ENCODE measurements at regions of chr15 and their contacts with region 1.

Region 1: DNA sequence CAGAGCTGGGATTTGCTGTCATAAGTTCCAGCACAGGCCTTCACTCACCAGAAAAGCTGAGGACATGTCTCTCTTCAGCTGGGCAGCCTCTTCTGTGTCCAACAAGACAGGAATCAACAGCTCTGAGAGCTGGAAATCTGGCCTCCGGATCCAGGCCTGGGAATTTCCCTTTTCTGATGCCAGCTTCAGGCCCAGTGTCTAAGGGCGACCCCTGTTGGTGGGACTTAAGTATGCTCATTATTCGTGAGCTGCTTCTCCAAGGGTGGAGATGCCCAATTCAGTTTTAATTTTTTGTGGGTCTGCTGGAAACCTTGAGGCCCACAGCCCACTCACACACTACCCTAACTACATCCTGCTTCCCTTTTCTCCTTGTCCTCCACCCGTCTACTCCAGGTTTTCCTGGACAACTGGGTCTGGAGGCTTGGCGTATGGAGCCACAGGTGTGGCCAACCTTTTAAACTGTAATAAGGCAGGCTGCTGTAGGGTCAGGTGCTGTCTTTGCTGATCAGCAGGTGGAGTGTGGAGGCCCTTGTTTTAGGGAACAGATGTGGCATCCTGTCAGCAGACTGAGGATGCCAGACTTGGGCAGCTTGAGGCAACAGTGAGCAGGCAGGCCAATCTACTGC is 2.6 kb upstream of the CEMIP start:
- DNase-seq: peak; percentile 64
- H3K4me3 ChIP-seq: no peak overlapping the region
- CTCF ChIP-seq: peak; percentile 79

Region 2: GRCh38 chr15:80418892-80419537 is 357.5 kb before region 1 on chr15:
- CTCF ChIA-PET with region 1: interaction called, 56 read pairs
- POLR2A ChIA-PET with region 1: no interaction called
- DNase-seq: no peak
- H3K4me3 ChIP-seq: no peak overlapping the region
- CTCF ChIP-seq: peak; percentile 73

Region 3: DNA sequence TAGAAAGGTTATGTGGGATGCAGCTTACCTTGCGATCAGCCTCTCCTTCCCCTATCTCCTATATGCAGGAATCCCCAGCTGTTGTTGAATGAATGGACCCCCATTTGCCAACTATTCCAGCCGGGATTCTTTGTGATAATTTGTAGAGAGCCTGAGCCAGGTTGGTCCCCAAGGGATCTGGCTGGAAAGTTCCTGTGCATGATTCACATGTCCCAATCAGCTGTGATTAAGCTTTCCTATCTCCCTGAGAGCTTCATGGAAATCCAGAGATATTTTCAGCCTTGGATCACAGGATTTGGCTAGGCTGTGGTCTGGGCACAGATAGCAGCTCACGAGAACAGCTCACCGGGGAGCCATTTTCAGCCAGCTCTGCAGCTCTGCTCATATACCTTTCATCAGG is 295.6 kb before region 1 on chr15:
- CTCF ChIA-PET with region 1: interaction called, 28 read pairs
- POLR2A ChIA-PET with region 1: interaction called, 7 read pairs
- DNase-seq: peak; percentile 93
- H3K4me3 ChIP-seq: peak overlapping the region; percentile 31
- CTCF ChIP-seq: no peak

Region 4: DNA sequence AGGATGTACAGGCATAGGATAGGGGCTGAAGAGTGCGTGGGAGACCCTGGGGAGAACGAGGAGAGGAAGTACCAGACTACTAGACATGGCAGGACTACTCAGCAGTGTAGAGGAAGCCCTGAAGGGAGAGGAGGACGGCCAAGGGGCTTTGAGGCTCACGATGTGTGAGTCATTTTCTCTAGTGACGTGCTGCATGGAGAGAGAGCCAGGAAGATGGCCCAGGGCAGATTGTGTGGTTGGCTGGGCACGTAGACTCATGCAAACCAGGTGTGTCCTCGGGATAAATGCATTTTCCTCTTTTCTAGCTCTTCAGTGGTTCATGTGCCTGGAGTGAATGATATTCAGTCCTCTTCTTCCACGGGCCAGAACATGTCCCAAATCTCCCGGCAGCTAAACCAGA is 196.4 kb before region 1 on chr15:
- CTCF ChIA-PET with region 1: interaction called, 23 read pairs
- POLR2A ChIA-PET with region 1: interaction called, 4 read pairs
- DNase-seq: peak; percentile 57
- H3K4me3 ChIP-seq: no peak overlapping the region
- CTCF ChIP-seq: no peak

Region 5: GRCh38 chr15:80619680-80620079 is 156.9 kb before region 1 on chr15:
- CTCF ChIA-PET with region 1: interaction called, 34 read pairs
- POLR2A ChIA-PET with region 1: no interaction called
- DNase-seq: no peak
- H3K4me3 ChIP-seq: no peak overlapping the region
- CTCF ChIP-seq: no peak

Region 6: DNA sequence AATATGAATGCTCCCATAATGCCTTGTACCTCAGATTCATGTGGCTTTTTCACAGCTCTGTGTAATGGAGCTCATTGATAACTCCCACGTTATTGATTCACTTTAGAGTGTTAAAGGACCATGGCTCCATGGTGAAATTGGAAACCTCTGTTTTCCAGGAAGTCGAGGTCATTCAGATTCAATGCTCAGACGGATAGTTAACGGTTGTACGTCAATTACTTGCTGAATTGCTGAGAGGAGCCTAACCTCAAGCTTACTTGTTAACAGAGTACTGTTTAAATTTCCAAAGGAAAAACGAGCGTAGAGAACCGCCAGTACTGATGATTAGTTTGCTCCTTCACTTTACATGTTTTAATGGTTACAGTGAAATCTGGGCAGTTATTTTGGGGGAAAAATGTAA is 70.4 kb before region 1 on chr15:
- CTCF ChIA-PET with region 1: interaction called, 10 read pairs
- POLR2A ChIA-PET with region 1: no interaction called
- DNase-seq: no peak
- H3K4me3 ChIP-seq: no peak overlapping the region
- CTCF ChIP-seq: no peak

Region 7: GRCh38 chr15:80789296-80789695 is 12.8 kb after region 1 on chr15:
- CTCF ChIA-PET with region 1: interaction called, 69 read pairs
- POLR2A ChIA-PET with region 1: interaction called, 10 read pairs
- DNase-seq: no peak
- H3K4me3 ChIP-seq: no peak overlapping the region; the same call in 1 of the 2 replicates
- CTCF ChIP-seq: no peak